ENCODE measurements at regions of chr5 and their contacts with region 1.

Region 1: DNA sequence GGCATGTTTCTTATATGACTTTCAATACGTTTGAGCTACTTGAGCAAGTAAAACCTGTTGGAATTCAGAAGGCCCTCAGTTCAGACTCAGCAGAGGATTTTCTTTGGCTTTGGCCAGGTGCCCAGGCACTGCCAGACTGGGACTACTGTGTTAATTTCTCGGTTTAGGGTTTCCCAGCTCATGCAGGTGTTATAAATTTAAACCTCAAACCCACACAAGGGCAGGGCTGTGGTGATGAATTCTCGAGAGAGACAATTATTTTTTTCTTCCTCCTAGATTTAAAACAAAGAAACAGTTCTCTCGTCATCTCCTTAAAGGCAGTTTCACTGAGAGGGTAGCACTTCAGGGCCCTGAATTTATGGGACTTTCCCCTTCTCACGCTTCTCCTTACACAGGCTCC is 406.0 kb upstream of the PIK3R1 start:
- DNase-seq: no peak

Region 2: GRCh38 chr5:67591491-67591890 is 218.1 kb before region 1 on chr5:
- intact Hi-C with region 1: no loop called
- DNase-seq: no peak

Region 3: GRCh38 chr5:67693956-67694809 is 115.4 kb before region 1 on chr5:
- intact Hi-C with region 1: loop called (anchors 5 kb)
- DNase-seq: peak; percentile 81

Region 4: GRCh38 chr5:67858471-67859031 is 49.0 kb after region 1 on chr5:
- intact Hi-C with region 1: no loop called
- DNase-seq: no peak

Region 5: GRCh38 chr5:67870662-67871061 is 61.1 kb after region 1 on chr5:
- intact Hi-C with region 1: loop called (anchors 5 kb)
- DNase-seq: no peak

Measured in cardiac septum (tissue), 1 donor.